ENCODE measurements at regions of chr1 and their contacts with region 1.

Region 1: GRCh38 chr1:27858072-27858958 is 14.0 kb upstream of the THEMIS2 start:
- DNase-seq: peak; percentile 90 to 92
- ATAC-seq: peak; percentile 88
- H3K4me3 ChIP-seq: no peak overlapping the region
- H3K27ac ChIP-seq: no peak overlapping the region
- H3K4me1 ChIP-seq: no peaks in the 10 kb centered on the region
- H3K27me3 ChIP-seq: no peaks in the 10 kb centered on the region

Region 2: GRCh38 chr1:27979151-27979858 is 121.0 kb after region 1 on chr1:
- intact Hi-C with region 1: loop called in 1 of 2 experiments (anchors 2 kb)
- DNase-seq: no peak
- ATAC-seq: peak; percentile 78
- H3K4me3 ChIP-seq: no peak overlapping the region
- H3K27ac ChIP-seq: no peak overlapping the region
- H3K4me1 ChIP-seq: no peaks in the 10 kb centered on the region
- H3K27me3 ChIP-seq: no peaks in the 10 kb centered on the region

Region 3: GRCh38 chr1:28208818-28209441 is 350.6 kb after region 1 on chr1:
- intact Hi-C with region 1: loop called in 1 of 2 experiments (anchors 10 kb)
- DNase-seq: no peak
- ATAC-seq: peak; percentile 67
- H3K4me3 ChIP-seq: no peak overlapping the region
- H3K27ac ChIP-seq: no peak overlapping the region
- H3K4me1 ChIP-seq: no peaks in the 10 kb centered on the region
- H3K27me3 ChIP-seq: no peaks in the 10 kb centered on the region